MCF 10A (cell line): ENCODE measurements at regions of chr3 and their contacts with region 1.

Region 1: DNA sequence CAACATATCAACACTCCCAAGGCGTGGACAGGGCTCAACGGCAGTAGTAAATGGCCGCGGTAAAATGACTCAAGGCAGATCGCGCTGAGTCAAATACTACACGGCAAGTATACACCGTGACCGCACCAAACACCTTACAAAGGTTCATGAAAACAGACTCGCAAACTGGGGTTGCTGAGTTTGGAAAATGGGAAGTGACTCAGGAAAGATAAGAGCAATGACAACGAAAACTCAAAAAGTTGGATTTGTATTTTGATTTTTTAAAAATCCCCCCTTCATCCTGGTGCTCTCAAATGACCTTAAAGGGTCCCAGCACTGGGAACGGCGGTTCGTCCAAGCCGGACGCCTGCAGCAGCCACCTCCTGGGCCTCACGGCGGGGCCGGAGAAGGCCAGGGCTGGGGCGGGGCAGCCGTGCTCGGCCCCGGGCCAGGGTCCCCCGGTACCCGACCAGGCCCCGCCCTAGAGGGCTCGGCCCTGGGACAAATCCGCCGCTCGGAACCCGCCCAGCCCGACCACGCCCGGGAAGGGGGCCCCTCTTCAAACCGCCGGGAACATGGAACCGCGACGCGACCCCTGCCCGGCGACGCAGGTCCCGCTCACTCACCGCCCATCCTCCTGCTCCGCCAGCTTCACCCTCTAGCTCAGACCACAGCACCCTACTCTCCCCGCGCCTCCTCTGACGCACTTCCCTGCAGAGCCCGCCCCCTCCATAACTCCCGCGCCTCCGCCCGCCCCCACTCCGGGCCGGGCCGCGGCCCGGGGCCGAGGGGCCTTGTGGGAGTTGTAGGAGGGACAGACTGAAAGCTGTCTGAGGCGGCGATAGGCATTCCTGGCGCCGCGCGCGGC is at the start of gene CLDND1:
- DNase-seq: peak; percentile 98
- H3K4me3 Mint-ChIP-seq: peak within 1 kb of the TSS; percentile 85
- H3K27ac Mint-ChIP-seq: peak within 1 kb of the TSS; percentile 81
- H3K4me1 Mint-ChIP-seq: peaks cover 27% of the 10 kb centered on the region
- H3K27me3 Mint-ChIP-seq: no peaks in the 10 kb centered on the region
- CTCF ChIP-seq: no peak
- total RNA-seq, gene CLDND1: 128 and 173 TPM in 2 replicates

Region 2: DNA sequence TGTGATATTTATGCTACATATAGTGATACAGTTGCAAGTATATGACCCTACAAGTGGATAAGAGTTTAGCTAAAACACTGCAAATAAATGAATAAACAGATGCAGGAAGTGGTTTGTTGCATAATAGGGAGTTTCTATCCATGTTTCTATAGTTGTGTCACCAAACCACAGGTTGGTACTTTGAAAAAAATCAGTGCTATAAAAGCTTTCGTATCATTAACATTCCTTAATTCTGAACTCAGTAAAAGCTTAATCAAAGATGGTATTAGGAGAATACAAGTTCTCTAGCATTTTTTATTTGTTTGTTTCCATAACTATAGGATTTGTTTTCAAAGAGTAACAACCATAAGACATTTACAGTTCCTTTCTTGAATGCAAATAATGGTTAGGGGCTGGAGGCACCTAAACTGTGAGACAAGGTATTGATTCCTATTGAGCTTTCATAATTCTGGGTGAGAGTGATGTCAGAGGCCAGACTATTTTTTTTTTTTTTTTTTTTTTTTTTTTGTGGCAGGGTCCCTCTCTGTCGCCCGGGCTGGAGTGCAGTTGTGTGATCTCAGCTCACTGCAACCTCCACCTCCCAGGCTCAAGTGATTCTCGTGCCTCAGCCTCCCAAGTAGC is 41.3 kb after region 1 on chr3:
- CTCF ChIA-PET with region 1: interaction called, 3 read pairs
- POLR2A ChIA-PET with region 1: interaction called, 5 read pairs
- intact Hi-C with region 1: loop called (anchors 1 kb)
- DNase-seq: peak; percentile 56
- H3K4me3 Mint-ChIP-seq: no peak overlapping the region
- H3K27ac Mint-ChIP-seq: peak overlapping the region; percentile 42
- H3K4me1 Mint-ChIP-seq: peaks cover 10% of the 10 kb centered on the region
- H3K27me3 Mint-ChIP-seq: no peaks in the 10 kb centered on the region
- CTCF ChIP-seq: no peak

Region 3: DNA sequence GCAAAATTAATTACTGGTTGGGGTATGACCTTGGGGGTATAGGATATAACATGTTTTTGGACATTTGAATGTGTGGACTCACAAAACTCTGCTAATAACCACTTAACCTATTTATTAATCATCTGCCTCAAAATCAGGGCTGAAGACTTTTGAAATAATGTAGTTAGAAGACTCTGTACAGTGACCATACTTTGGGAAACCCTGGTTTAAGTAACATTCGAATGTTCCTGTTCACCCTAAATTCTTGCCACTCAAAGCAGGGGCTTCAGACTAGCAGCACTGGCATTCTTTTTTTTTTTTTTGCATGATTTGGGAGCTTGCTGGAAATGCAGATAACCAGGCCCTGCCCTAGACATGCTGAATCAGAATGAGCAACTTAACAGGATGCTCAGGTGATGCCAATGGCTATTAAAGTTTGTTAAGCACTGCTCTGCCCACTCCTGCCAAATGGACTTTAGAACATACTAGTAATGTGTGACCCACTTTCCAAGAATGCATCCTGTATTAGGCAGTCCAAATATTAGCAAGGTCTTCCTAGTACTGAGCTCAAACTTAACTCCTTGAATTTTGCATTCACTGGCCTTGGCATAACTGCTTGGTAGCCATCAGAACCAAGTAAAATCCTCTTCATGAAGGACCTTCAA is 227.9 kb after region 1 on chr3:
- CTCF ChIA-PET with region 1: no interaction called
- POLR2A ChIA-PET with region 1: no interaction called
- intact Hi-C with region 1: no loop called
- DNase-seq: no peak
- H3K4me3 Mint-ChIP-seq: no peak overlapping the region
- H3K27ac Mint-ChIP-seq: no peak overlapping the region
- H3K4me1 Mint-ChIP-seq: peaks cover 5% of the 10 kb centered on the region
- H3K27me3 Mint-ChIP-seq: no peaks in the 10 kb centered on the region
- CTCF ChIP-seq: no peak